GM10248 (cell line): ENCODE measurements at regions of chr2 and their contacts with region 1.

Region 1: DNA sequence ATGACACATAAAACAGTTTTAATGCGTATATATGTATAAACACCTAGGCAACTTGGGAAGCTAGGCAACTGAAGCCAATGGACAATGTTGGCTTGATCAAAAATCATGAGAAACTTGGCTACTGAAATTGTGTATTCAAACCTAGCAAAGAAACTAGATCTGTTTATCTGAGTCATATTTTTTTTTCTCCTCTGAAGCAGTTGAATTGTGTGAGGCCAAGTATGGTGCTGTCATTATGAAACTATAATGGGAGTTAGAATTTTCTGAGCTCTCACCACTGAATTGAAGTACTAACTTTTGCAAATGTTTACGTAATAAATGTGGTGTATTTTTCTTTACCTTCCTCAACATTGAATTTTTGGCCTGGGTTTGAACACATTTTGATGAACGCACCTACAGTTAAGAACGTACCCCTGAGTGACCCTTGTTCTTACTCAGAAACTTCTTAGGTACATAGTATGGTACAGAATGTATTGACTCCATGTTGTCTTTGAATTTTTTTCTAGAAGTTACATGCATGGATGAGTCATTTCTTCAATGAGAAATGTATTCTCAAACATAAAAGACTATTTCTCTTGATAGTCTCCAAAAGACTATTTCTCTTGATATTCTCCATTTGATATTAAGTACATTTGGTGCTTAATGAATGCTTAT is 23.8 kb downstream of the CD28 start:
- DNase-seq: peak; percentile 44
- CTCF ChIP-seq: no peak

Region 2: GRCh38 chr2:203719456-203720410 is 10.5 kb before region 1 on chr2:
- CTCF ChIA-PET with region 1: interaction called, 10 read pairs
- POLR2A ChIA-PET with region 1: no interaction called
- DNase-seq: no peak
- CTCF ChIP-seq: no peak